ENCODE measurements at regions of chr13 and their contacts with region 1.

Region 1: DNA sequence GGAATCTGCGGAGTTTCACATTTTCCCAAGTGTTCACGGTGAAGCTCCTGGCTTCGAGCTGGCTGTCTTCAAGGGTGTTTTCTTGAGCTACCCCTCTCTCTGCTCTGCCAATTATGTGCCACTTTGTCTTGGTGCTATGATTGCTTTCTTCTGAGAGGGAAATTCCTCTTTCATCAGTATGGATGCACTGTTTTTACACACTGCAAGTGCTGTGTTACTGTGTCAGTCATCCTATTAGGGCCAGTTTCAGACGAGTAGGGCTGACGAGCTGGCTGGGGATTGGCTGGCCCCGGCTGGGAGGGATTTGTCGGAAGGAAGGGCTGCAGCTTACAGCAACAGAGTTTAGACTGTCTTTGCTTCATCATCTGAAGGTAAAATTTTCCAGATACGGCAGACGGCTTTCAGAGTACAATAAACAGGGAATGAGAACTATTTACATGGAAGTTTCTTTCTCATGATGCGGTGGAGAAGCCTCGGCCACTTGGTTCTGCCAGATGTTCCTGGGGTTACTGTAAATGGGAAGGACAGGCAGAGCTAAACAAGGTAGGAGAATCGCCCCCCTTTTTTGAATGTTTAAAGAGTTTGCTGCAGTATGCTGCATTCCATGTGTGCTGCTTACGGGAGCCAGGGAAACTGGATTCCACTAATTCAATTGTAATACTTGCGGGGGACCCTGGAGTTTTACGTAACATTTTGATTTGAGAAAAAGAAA is at the start of gene MBNL2:
- DNase-seq: peak; percentile 73 to 94 (median 80)
- ATAC-seq: peak; percentile 95
- H3K4me3 ChIP-seq: peak within 1 kb of the TSS; percentile 58
- H3K4me3 Mint-ChIP-seq: peak within 1 kb of the TSS; percentile 91
- H3K27ac ChIP-seq: peak within 1 kb of the TSS; percentile 77 to 81
- H3K27ac Mint-ChIP-seq: peak within 1 kb of the TSS; percentile 89
- H3K4me1 ChIP-seq: peaks cover 32% of the 10 kb centered on the region
- H3K4me1 Mint-ChIP-seq: peaks cover 40% of the 10 kb centered on the region
- H3K27me3 ChIP-seq: no peaks in the 10 kb centered on the region
- H3K27me3 Mint-ChIP-seq: no peaks in the 10 kb centered on the region
- CTCF ChIP-seq: no peak
- total RNA-seq, gene MBNL2: 35.9 to 36.0 TPM

Region 2: DNA sequence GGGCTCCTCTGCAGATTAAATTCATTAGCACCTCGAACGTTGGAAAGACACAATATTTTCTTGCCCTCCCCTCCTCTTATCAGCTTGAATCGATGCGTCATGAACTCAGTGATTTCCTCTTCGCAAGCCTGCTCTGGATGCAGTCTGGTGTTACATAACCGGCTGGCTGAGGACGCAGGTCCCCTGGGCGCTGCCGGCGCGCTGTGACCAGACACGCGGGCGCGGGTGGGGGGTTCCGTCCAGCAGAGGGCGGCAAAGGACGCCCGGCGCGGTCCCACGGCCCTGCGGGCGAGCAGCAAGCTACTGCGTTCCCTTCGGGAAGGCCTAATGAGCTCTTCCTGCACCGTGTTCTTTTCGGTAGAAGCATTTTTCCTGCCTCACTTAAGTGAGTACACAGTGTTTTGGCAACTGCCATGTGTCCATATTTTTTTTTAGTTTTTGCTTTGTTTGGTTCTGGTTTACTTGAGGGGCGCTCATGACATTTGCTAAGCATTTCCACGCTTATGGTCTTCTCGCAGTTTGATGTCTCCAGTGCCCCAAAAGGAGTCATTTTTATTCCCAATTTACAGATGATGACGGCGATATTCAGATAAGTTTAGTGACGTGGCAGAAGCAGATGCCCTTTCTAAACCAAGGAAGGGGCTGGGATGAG is 112.2 kb before region 1 on chr13:
- CTCF ChIA-PET with region 1: interaction called, 10 read pairs
- POLR2A ChIA-PET with region 1: interaction called, 4 read pairs
- intact Hi-C with region 1: loop called (anchors 5 kb)
- DNase-seq: peak; percentile 60 to 89 (median 76)
- ATAC-seq: peak; percentile 91
- H3K4me3 ChIP-seq: no peak overlapping the region
- H3K4me3 Mint-ChIP-seq: peak overlapping the region; percentile 39
- H3K27ac ChIP-seq: no peak overlapping the region
- H3K27ac Mint-ChIP-seq: peak overlapping the region; percentile 24
- H3K4me1 ChIP-seq: peaks cover 14% of the 10 kb centered on the region
- H3K4me1 Mint-ChIP-seq: peaks cover 18% of the 10 kb centered on the region
- H3K27me3 ChIP-seq: peaks cover 2 to 9% of the 10 kb centered on the region in 2 experiments
- H3K27me3 Mint-ChIP-seq: peaks cover 10% of the 10 kb centered on the region
- CTCF ChIP-seq: peak; percentile 91

Region 3: GRCh38 chr13:97284558-97284957 is 62.4 kb after region 1 on chr13:
- CTCF ChIA-PET with region 1: no interaction called
- POLR2A ChIA-PET with region 1: no interaction called
- intact Hi-C with region 1: no loop called
- DNase-seq: no peak
- ATAC-seq: no peak
- H3K4me3 ChIP-seq: no peak overlapping the region
- H3K4me3 Mint-ChIP-seq: no peak overlapping the region
- H3K27ac ChIP-seq: no peak overlapping the region
- H3K27ac Mint-ChIP-seq: no peak overlapping the region
- H3K4me1 ChIP-seq: peaks cover 10% of the 10 kb centered on the region
- H3K4me1 Mint-ChIP-seq: peaks cover 58% of the 10 kb centered on the region
- H3K27me3 ChIP-seq: no peaks in the 10 kb centered on the region
- H3K27me3 Mint-ChIP-seq: no peaks in the 10 kb centered on the region
- CTCF ChIP-seq: no peak

Region 4: GRCh38 chr13:97344265-97345175 is 122.4 kb after region 1 on chr13:
- CTCF ChIA-PET with region 1: no interaction called
- POLR2A ChIA-PET with region 1: no interaction called
- intact Hi-C with region 1: loop called in 1 of 2 experiments (anchors 5 kb)
- DNase-seq: peak in 12 of 14 experiments; percentile 7 to 67 (median 36)
- ATAC-seq: peak; percentile 49
- H3K4me3 ChIP-seq: no peak overlapping the region
- H3K4me3 Mint-ChIP-seq: no peak overlapping the region
- H3K27ac ChIP-seq: no peak overlapping the region
- H3K27ac Mint-ChIP-seq: no peak overlapping the region
- H3K4me1 ChIP-seq: peaks cover 4% of the 10 kb centered on the region
- H3K4me1 Mint-ChIP-seq: no peaks in the 10 kb centered on the region
- H3K27me3 ChIP-seq: no peaks in the 10 kb centered on the region
- H3K27me3 Mint-ChIP-seq: no peaks in the 10 kb centered on the region
- CTCF ChIP-seq: peak; percentile 69

Region 5: DNA sequence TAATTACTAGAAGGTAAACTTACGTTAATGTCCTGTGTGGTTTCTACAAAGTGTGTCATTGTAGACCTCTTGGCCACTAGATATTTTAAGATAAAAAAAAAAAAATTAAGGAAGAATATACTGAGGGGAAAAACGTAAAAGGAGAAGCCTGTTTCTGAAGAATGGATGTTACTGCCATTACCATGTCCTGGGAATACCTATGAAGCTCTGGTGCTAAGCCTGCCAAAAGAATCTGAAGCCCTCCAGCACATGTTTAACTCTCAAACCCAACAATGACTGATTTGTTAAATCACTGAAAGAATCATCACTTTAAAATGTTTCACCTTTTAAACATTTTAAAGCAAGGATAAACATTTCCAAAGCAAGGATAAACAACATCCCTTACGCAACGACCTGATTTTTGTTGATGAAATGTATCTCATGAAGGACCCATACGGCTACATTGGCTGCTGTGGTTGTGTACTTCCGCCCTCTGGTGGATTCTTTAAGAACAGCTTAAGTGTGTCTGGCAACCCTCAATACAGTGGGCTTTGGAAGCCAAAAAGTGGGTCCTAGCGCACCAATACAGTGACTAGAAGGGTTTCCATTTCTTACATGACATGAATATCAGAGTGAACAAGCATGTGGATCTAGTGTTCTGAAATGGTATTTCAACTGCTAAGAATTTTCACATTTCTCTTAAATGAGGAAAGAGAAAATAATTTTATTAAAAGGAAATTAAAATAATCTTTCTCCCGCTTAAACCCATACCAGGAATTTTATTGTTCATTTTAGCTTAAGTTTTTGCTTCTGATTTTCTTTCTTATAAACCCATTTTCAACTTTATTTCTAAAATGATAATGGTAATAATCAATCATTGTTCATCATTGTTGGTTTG is 137.3 kb after region 1 on chr13:
- CTCF ChIA-PET with region 1: interaction called, 8 read pairs
- POLR2A ChIA-PET with region 1: no interaction called
- intact Hi-C with region 1: loop called in 1 of 2 experiments (anchors 10 kb)
- DNase-seq: peak in 13 of 14 experiments; percentile 13 to 80 (median 26)
- ATAC-seq: peak; percentile 98
- H3K4me3 ChIP-seq: no peak overlapping the region
- H3K4me3 Mint-ChIP-seq: no peak overlapping the region
- H3K27ac ChIP-seq: no peak overlapping the region
- H3K27ac Mint-ChIP-seq: peak overlapping the region; percentile 10
- H3K4me1 ChIP-seq: no peaks in the 10 kb centered on the region
- H3K4me1 Mint-ChIP-seq: peaks cover 5% of the 10 kb centered on the region
- H3K27me3 ChIP-seq: no peaks in the 10 kb centered on the region
- H3K27me3 Mint-ChIP-seq: no peaks in the 10 kb centered on the region
- CTCF ChIP-seq: peak; percentile 83

Region 6: DNA sequence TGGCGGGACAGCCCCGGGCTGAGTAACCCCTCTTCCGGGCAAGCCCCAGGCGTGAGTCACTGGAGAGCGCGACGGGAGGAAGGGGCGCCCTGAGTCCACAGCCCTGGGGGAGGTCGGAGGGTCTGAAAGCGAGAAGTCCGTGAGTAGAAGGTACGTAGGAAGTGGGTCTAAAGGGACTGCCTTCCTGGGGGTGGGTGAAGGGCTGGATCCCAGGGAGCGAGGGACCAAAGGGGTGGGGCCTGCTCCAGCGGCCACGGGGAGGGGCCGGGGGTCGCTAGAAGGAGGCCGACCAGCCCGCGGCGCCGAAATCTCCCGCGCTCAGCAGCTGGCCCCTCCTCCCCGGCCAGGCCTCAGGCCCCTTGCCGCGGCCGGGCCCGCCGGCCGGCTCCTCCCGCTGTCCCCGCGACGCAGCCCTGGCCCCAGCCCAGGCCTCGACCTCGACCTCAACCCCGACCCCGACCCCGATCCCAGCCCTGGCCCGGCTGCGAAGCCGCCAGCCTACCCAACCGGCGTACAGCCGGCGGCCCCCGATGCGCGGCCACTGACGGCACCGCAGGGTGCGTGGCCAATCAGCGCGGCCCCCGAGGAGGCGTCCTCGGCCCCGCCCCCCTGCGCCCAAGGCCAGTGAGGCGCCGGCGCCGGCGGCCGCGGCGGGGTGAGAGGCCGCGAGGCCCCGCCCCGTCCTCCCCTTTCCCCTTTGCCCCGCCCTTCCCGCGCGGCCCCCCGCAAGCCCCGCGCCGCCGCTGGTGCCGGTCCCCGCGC is 753.9 kb after region 1 on chr13:
- CTCF ChIA-PET with region 1: interaction called, 4 read pairs
- POLR2A ChIA-PET with region 1: no interaction called
- intact Hi-C with region 1: loop called in 1 of 2 experiments (anchors 2 kb)
- DNase-seq: peak; percentile 16 to 97 (median 88)
- ATAC-seq: peak; percentile 89
- H3K4me3 ChIP-seq: peak overlapping the region; percentile 91
- H3K4me3 Mint-ChIP-seq: peak overlapping the region; percentile 96
- H3K27ac ChIP-seq: peak overlapping the region; percentile 75 to 82
- H3K27ac Mint-ChIP-seq: peak overlapping the region; percentile 92
- H3K4me1 ChIP-seq: peaks cover 15% of the 10 kb centered on the region
- H3K4me1 Mint-ChIP-seq: peaks cover 48% of the 10 kb centered on the region
- H3K27me3 ChIP-seq: no peaks in the 10 kb centered on the region
- H3K27me3 Mint-ChIP-seq: no peaks in the 10 kb centered on the region
- CTCF ChIP-seq: no peak